ENCODE measurements at regions of chr15 and their contacts with region 1.

Region 1: GRCh38 chr15:97652700-97653167 is 307.8 kb upstream of the ARRDC4 start:
- DNase-seq: no peak
- ATAC-seq: no peak
- H3K4me3 ChIP-seq: no peak overlapping the region
- H3K4me3 Mint-ChIP-seq: no peak overlapping the region
- H3K27ac ChIP-seq: no peak overlapping the region
- H3K27ac Mint-ChIP-seq: no peak overlapping the region
- H3K4me1 ChIP-seq: no peaks in the 10 kb centered on the region
- H3K4me1 Mint-ChIP-seq: peaks cover 3% of the 10 kb centered on the region
- H3K27me3 ChIP-seq: no peaks in the 10 kb centered on the region
- H3K27me3 Mint-ChIP-seq: peaks cover 11% of the 10 kb centered on the region
- CTCF ChIP-seq: no peak

Region 2: GRCh38 chr15:97215629-97216028 is 437.1 kb before region 1 on chr15:
- CTCF ChIA-PET with region 1: no interaction called
- POLR2A ChIA-PET with region 1: no interaction called
- intact Hi-C with region 1: no loop called
- DNase-seq: no peak
- ATAC-seq: no peak
- H3K4me3 ChIP-seq: no peak overlapping the region
- H3K4me3 Mint-ChIP-seq: no peak overlapping the region
- H3K27ac ChIP-seq: no peak overlapping the region
- H3K27ac Mint-ChIP-seq: no peak overlapping the region
- H3K4me1 ChIP-seq: no peaks in the 10 kb centered on the region
- H3K4me1 Mint-ChIP-seq: no peaks in the 10 kb centered on the region
- H3K27me3 ChIP-seq: no peaks in the 10 kb centered on the region
- H3K27me3 Mint-ChIP-seq: no peaks in the 10 kb centered on the region
- CTCF ChIP-seq: no peak

Region 3: DNA sequence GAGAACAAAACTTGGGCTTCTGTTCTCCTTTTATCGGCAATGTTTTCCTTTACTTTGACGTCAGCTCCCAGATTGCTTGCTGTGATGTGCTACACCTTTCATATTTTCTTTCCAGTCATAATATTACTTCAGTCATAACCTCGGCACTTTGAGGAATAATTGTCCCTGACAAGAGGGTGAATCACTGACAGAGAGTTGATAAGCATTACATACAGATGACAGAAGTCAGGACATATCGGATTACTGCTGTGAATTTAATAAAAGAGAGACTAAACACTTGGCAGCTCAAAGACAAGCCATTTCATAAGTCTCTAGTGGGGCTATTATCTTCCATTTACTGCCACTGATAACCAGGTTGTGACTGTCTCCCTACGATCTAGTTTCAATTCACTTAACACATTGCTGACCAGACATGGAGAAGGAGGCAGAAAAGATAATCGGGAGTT is 54.4 kb before region 1 on chr15:
- CTCF ChIA-PET with region 1: no interaction called
- POLR2A ChIA-PET with region 1: no interaction called
- intact Hi-C with region 1: loop called in 1 of 2 experiments (anchors 10 kb)
- DNase-seq: no peak
- ATAC-seq: no peak
- H3K4me3 ChIP-seq: no peak overlapping the region
- H3K4me3 Mint-ChIP-seq: no peak overlapping the region
- H3K27ac ChIP-seq: no peak overlapping the region
- H3K27ac Mint-ChIP-seq: no peak overlapping the region
- H3K4me1 ChIP-seq: no peaks in the 10 kb centered on the region
- H3K4me1 Mint-ChIP-seq: no peaks in the 10 kb centered on the region
- H3K27me3 ChIP-seq: no peaks in the 10 kb centered on the region
- H3K27me3 Mint-ChIP-seq: no peaks in the 10 kb centered on the region
- CTCF ChIP-seq: no peak